B cell (primary cell): ENCODE measurements at regions of chr12 and their contacts with region 1.

Region 1: GRCh38 chr12:49060237-49061156 is at the start of gene KMT2D:
- DNase-seq: peak; percentile 97
- ATAC-seq: peak; percentile 72
- H3K4me3 ChIP-seq: peak within 1 kb of the TSS; percentile 81 to 97 (median 91)
- H3K4me3 Mint-ChIP-seq: peak within 1 kb of the TSS; percentile 97
- H3K27ac ChIP-seq: peak within 1 kb of the TSS; percentile 77 to 88
- H3K27ac Mint-ChIP-seq: peak within 1 kb of the TSS; percentile 99
- H3K4me1 ChIP-seq: peaks cover 46 to 50% of the 10 kb centered on the region in 2 donors
- H3K4me1 Mint-ChIP-seq: peaks cover 50% of the 10 kb centered on the region
- H3K27me3 ChIP-seq: no peaks in the 10 kb centered on the region
- H3K27me3 Mint-ChIP-seq: no peaks in the 10 kb centered on the region
- CTCF ChIP-seq: no peak
- total RNA-seq, gene KMT2D: 179 and 199 TPM in 2 replicates

Region 2: DNA sequence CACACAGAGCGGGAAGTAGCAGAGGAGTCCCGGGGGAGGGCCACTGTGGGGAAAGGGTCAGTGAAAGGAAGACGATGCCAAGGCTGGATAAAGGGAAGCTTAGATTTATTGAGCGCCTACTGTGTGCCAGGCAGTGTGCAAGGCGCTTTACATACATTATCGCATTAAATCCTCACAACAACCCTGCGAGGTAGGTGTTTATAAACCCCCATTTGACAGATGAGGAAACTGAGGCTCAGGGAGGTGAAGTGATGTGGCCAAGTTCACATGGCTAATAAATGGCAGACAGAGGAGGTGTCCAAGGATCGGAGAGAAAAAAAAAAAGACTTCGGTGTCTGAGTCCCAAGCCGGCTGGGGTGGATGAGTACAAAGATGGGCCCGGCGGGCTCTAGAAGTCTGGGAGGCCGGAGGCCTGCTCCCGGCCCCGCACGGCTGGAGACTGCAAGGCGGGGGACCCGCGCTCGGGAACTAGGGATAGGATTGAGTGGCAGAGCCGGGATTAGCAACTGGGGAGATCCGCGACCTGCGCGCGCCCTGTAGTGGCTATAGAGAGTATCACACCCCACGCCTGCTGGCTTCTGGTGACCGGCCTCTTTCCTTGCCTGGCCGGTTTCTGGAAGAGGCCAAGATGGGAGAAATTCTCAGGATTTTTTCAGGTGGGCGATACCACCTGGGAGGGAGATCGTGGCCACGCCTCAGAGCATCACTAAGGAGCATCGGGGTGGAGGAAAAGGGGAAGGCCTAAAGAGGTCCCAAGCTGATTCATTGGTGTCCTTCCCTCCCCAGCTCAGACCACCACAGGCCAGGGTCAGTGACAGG is 65.2 kb before region 1 on chr12:
- CTCF ChIA-PET with region 1: interaction called, 21 read pairs
- POLR2A ChIA-PET with region 1: no interaction called
- intact Hi-C with region 1: loop called (anchors 5 kb)
- DNase-seq: peak; percentile 72
- ATAC-seq: peak; percentile 26
- H3K4me3 ChIP-seq: peak overlapping the region in 1 of 5 experiments; percentile 23
- H3K4me3 Mint-ChIP-seq: peak overlapping the region; percentile 59
- H3K27ac ChIP-seq: no peak overlapping the region
- H3K27ac Mint-ChIP-seq: no peak overlapping the region
- H3K4me1 ChIP-seq: peaks cover 37 to 44% of the 10 kb centered on the region in 2 donors
- H3K4me1 Mint-ChIP-seq: peaks cover 40% of the 10 kb centered on the region
- H3K27me3 ChIP-seq: peaks cover 0 to 72% (median 33%) of the 10 kb centered on the region in 4 experiments
- H3K27me3 Mint-ChIP-seq: peaks cover 32% of the 10 kb centered on the region
- CTCF ChIP-seq: peak; percentile 86

Region 3: GRCh38 chr12:49043856-49044258 is 16.6 kb before region 1 on chr12:
- CTCF ChIA-PET with region 1: interaction called, 25 read pairs
- POLR2A ChIA-PET with region 1: no interaction called
- intact Hi-C with region 1: no loop called
- DNase-seq: peak; percentile 79
- ATAC-seq: peak; percentile 78
- H3K4me3 ChIP-seq: no peak overlapping the region
- H3K4me3 Mint-ChIP-seq: no peak overlapping the region
- H3K27ac ChIP-seq: no peak overlapping the region
- H3K27ac Mint-ChIP-seq: peak overlapping the region; percentile 3
- H3K4me1 ChIP-seq: no peaks in the 10 kb centered on the region
- H3K4me1 Mint-ChIP-seq: peaks cover 2% of the 10 kb centered on the region
- H3K27me3 ChIP-seq: no peaks in the 10 kb centered on the region
- H3K27me3 Mint-ChIP-seq: no peaks in the 10 kb centered on the region
- CTCF ChIP-seq: peak; percentile 80

Region 4: GRCh38 chr12:49088190-49088931 is 27.9 kb after region 1 on chr12:
- CTCF ChIA-PET with region 1: interaction called, 199 read pairs
- POLR2A ChIA-PET with region 1: interaction called, 4 read pairs
- intact Hi-C with region 1: loop called (anchors 1 kb)
- DNase-seq: peak; percentile 88
- ATAC-seq: peak; percentile 92
- H3K4me3 ChIP-seq: peak overlapping the region in 1 of 5 experiments; percentile 10
- H3K4me3 Mint-ChIP-seq: peak overlapping the region; percentile 70
- H3K27ac ChIP-seq: no peak overlapping the region
- H3K27ac Mint-ChIP-seq: no peak overlapping the region
- H3K4me1 ChIP-seq: peaks cover 47 to 48% of the 10 kb centered on the region in 2 donors
- H3K4me1 Mint-ChIP-seq: peaks cover 38% of the 10 kb centered on the region
- H3K27me3 ChIP-seq: peaks cover 0 to 57% (median 37%) of the 10 kb centered on the region in 4 experiments
- H3K27me3 Mint-ChIP-seq: peaks cover 46% of the 10 kb centered on the region
- CTCF ChIP-seq: peak; percentile 96

Region 5: DNA sequence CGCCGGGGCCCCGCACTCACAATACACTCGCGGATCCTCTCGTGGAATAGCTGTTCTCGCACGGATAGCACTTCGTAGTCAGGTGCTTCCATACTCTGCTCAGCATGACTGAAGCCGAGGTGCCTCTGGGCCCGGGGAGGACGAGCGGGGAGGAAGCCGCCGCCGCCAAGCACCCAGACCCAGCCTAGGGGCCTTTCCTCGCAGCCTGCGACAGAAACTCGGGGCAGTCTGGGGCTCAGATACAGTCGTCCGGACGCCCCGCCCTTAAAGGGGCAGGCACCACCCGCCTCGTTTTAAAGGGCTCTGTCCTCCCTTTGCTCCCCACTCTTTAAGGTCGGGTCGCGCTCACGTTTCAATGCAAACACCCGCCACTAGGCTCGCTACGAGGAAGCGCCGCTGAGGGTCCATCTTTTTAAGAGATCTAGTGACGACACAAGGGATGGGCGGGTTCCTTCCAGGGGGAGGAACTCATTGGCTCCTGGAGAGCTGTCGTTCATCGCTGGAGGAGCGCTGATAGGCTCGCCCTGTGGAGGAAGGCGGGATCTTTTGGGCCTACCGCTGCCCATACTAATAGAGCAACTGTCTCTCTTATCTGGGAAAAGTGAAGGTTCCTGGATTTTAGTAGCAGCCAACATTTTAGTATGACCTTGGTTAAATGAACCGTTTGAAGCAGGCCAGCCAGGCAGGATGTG is 50.1 kb after region 1 on chr12 and contains the start of gene LMBR1L:
- CTCF ChIA-PET with region 1: interaction called, 14 read pairs
- POLR2A ChIA-PET with region 1: no interaction called
- intact Hi-C with region 1: no loop called
- DNase-seq: peak; percentile 99
- ATAC-seq: peak; percentile 93
- H3K4me3 ChIP-seq: peak within 1 kb of the TSS; percentile 61 to 99 (median 86)
- H3K4me3 Mint-ChIP-seq: peak within 1 kb of the TSS; percentile 96
- H3K27ac ChIP-seq: peak within 1 kb of the TSS; percentile 88 to 90
- H3K27ac Mint-ChIP-seq: peak within 1 kb of the TSS; percentile 96
- H3K4me1 ChIP-seq: peaks cover 16 to 23% of the 10 kb centered on the region in 2 donors
- H3K4me1 Mint-ChIP-seq: peaks cover 44% of the 10 kb centered on the region
- H3K27me3 ChIP-seq: no peaks in the 10 kb centered on the region
- H3K27me3 Mint-ChIP-seq: no peaks in the 10 kb centered on the region
- CTCF ChIP-seq: peak; percentile 66
- total RNA-seq, gene LMBR1L: 182 and 187 TPM in 2 replicates